Calu3 (cell line): ENCODE measurements at regions of chr7 and their contacts with region 1.

Region 1: GRCh38 chr7:98110249-98111022 is 3.8 kb downstream of the LMTK2 start:
- DNase-seq: peak; percentile 49
- H3K4me3 Mint-ChIP-seq: peak overlapping the region; percentile 55
- H3K27ac Mint-ChIP-seq: no peak overlapping the region
- H3K4me1 Mint-ChIP-seq: peaks cover 59% of the 10 kb centered on the region
- H3K27me3 Mint-ChIP-seq: no peaks in the 10 kb centered on the region
- CTCF ChIP-seq: no peak

Region 2: GRCh38 chr7:98133181-98133580 is 22.7 kb after region 1 on chr7:
- CTCF ChIA-PET with region 1: interaction called, 18 read pairs
- intact Hi-C with region 1: loop called (anchors 1 kb)
- DNase-seq: peak; percentile 5
- H3K4me3 Mint-ChIP-seq: peak overlapping the region; percentile 3
- H3K27ac Mint-ChIP-seq: peak overlapping the region; percentile 28
- H3K4me1 Mint-ChIP-seq: peaks cover 56% of the 10 kb centered on the region
- H3K27me3 Mint-ChIP-seq: no peaks in the 10 kb centered on the region
- CTCF ChIP-seq: no peak

Region 3: DNA sequence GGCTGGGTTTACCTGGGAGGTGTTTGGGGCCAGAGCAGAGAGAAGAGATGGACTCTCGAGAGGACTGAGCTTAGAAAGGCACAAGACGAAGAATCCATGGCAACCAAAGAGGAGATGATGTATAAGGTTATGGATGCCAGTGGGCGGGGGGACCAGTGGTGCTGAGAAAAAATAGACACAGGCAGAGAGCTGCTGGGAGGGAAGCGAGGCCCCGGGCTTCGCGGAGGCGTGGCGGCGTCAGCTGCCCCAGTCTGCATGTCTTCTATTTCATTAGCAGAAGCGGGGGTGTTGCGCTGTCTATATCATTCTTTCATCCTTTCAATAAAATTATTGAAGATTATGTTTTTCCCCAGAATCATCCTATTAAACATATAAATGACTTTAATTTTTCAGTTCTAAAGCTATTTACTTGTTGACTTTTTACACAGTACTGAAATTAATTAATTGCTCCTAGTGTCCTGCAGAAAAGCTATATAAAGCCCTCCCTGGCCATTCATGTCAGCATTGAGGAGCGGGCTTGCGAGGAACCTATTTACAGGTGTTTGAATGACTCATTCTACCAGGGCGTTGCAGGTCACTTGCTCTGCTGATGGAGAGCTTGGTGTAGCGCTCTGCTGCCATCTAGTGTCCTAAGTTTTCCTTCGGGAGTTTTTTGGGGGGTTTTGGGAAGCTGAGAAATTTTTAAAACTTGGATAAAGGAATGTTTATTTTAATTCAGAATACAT is 57.9 kb after region 1 on chr7:
- CTCF ChIA-PET with region 1: interaction called, 6 read pairs
- intact Hi-C with region 1: loop called (anchors 2 kb)
- DNase-seq: peak; percentile 66
- H3K4me3 Mint-ChIP-seq: no peak overlapping the region
- H3K27ac Mint-ChIP-seq: peak overlapping the region; percentile 2
- H3K4me1 Mint-ChIP-seq: no peaks in the 10 kb centered on the region
- H3K27me3 Mint-ChIP-seq: no peaks in the 10 kb centered on the region
- CTCF ChIP-seq: peak; percentile 68